Activated CD8-positive, alpha-beta T cell treated with anti-CD3 and anti-CD28 coated beads, Interleukin-2, amount 10 ng/mL, durations not matched to agents 7 days and 5 days (primary cell): ENCODE measurements at regions of chr17 and their contacts with region 1.

Region 1: GRCh38 chr17:60154616-60155426 is 5.0 kb downstream of the CA4 start:
- DNase-seq: no peak
- ATAC-seq: no peak
- H3K4me3 Mint-ChIP-seq: no peak overlapping the region
- H3K27ac Mint-ChIP-seq: no peak overlapping the region
- H3K4me1 Mint-ChIP-seq: peaks cover 13% of the 10 kb centered on the region
- H3K27me3 Mint-ChIP-seq: peaks cover 26% of the 10 kb centered on the region

Region 2: DNA sequence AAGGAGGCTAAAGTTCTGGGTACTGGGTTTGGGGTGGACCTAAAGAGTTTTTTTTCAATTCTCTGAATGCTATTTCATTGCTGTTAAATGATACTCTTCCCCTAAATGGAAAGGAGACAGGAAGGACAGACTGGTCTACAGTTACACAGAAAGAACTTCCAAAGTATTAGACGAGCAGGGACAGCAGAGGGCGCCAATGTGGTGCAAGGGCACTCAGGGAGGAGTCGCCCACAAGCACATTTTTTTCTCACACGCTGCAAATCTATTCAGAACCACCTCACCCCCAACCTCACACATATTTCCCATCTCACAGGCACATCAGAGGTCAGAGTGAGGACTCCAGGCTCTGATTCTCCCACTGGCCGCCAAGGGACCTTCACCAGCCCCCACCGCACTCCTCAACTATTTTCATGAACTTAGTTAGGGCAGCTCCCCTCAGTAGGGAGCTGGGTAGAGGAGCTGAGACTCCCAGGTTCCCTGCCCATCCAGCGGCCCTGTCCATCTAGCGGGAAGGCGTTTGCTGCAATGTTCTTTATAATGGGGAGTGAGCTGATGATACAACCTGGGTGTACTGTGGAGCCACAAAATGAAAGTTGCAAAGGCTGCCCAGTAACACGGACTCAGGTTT is 11.8 kb before region 1 on chr17:
- CTCF ChIA-PET with region 1: interaction called, 39 read pairs
- POLR2A ChIA-PET with region 1: no interaction called
- DNase-seq: peak; percentile 89
- ATAC-seq: peak; percentile 80
- H3K4me3 Mint-ChIP-seq: no peak overlapping the region
- H3K27ac Mint-ChIP-seq: no peak overlapping the region
- H3K4me1 Mint-ChIP-seq: peaks cover 26% of the 10 kb centered on the region
- H3K27me3 Mint-ChIP-seq: peaks cover 88% of the 10 kb centered on the region